CD8-positive, alpha-beta T cell (primary cell): ENCODE measurements at regions of chr5 and their contacts with region 1.

Region 1: DNA sequence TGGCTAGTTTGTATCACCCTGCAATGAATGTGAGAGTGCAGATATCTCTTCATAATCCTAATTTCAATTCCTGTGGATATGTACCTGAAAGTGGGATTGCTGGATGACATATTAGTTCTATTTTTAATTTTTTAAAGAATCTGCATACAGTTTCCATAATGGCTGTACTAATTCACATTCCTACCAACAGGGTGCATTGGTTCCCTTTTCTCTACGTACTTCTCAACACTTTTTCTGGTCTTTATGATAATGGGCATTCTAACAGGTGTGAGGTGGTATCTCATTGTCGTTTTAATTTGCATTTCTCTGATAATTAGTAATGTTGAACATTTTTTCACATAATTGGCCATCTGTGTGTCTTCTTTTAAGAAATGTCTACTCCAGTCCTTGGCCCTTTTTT is 927.5 kb downstream of the DTWD2 start:
- DNase-seq: no peak
- ATAC-seq: no peak
- H3K4me3 ChIP-seq: no peak overlapping the region
- H3K4me3 Mint-ChIP-seq: no peak overlapping the region
- H3K27ac ChIP-seq: no peak overlapping the region
- H3K27ac Mint-ChIP-seq: no peak overlapping the region
- H3K4me1 ChIP-seq: no peaks in the 10 kb centered on the region
- H3K4me1 Mint-ChIP-seq: no peaks in the 10 kb centered on the region
- H3K27me3 ChIP-seq: no peaks in the 10 kb centered on the region
- H3K27me3 Mint-ChIP-seq: no peaks in the 10 kb centered on the region
- CTCF ChIP-seq: no peak

Region 2: GRCh38 chr5:118044169-118044568 is 16.7 kb before region 1 on chr5:
- CTCF ChIA-PET with region 1: no interaction called
- POLR2A ChIA-PET with region 1: no interaction called
- intact Hi-C with region 1: loop called in 1 of 2 experiments (anchors 2 kb)
- DNase-seq: no peak
- ATAC-seq: no peak
- H3K4me3 ChIP-seq: no peak overlapping the region
- H3K4me3 Mint-ChIP-seq: no peak overlapping the region
- H3K27ac ChIP-seq: no peak overlapping the region
- H3K27ac Mint-ChIP-seq: no peak overlapping the region
- H3K4me1 ChIP-seq: no peaks in the 10 kb centered on the region
- H3K4me1 Mint-ChIP-seq: no peaks in the 10 kb centered on the region
- H3K27me3 ChIP-seq: no peaks in the 10 kb centered on the region
- H3K27me3 Mint-ChIP-seq: no peaks in the 10 kb centered on the region
- CTCF ChIP-seq: no peak

Region 3: DNA sequence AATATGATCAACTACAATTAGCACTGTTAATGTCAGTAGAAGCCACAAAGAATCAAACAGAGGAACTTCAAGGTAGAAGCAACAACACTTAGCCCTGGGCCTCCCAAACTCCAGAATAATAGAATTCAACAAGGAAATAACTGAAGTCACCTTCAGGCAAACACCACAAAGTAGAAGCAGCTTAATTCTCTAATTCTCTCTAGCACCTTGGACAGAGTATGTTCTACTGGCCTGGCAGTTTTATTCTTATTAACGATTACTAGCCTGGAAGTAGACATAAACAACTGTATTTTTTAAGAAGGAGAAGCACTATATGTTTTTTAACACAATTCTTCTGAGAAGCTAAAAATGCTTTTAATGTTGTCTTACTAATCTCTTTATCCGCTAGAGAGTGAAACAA is 15.7 kb after region 1 on chr5:
- CTCF ChIA-PET with region 1: no interaction called
- POLR2A ChIA-PET with region 1: no interaction called
- intact Hi-C with region 1: no loop called
- DNase-seq: no peak
- ATAC-seq: no peak
- H3K4me3 ChIP-seq: no peak overlapping the region
- H3K4me3 Mint-ChIP-seq: no peak overlapping the region
- H3K27ac ChIP-seq: no peak overlapping the region
- H3K27ac Mint-ChIP-seq: no peak overlapping the region
- H3K4me1 ChIP-seq: no peaks in the 10 kb centered on the region
- H3K4me1 Mint-ChIP-seq: no peaks in the 10 kb centered on the region
- H3K27me3 ChIP-seq: no peaks in the 10 kb centered on the region
- H3K27me3 Mint-ChIP-seq: no peaks in the 10 kb centered on the region
- CTCF ChIP-seq: no peak

Region 4: GRCh38 chr5:118303296-118303695 is 242.5 kb after region 1 on chr5:
- CTCF ChIA-PET with region 1: no interaction called
- POLR2A ChIA-PET with region 1: no interaction called
- intact Hi-C with region 1: no loop called
- DNase-seq: no peak
- ATAC-seq: no peak
- H3K4me3 ChIP-seq: no peak overlapping the region
- H3K4me3 Mint-ChIP-seq: no peak overlapping the region
- H3K27ac ChIP-seq: no peak overlapping the region
- H3K27ac Mint-ChIP-seq: no peak overlapping the region
- H3K4me1 ChIP-seq: no peaks in the 10 kb centered on the region
- H3K4me1 Mint-ChIP-seq: no peaks in the 10 kb centered on the region
- H3K27me3 ChIP-seq: no peaks in the 10 kb centered on the region
- H3K27me3 Mint-ChIP-seq: no peaks in the 10 kb centered on the region
- CTCF ChIP-seq: no peak

Region 5: GRCh38 chr5:118736396-118736795 is 675.6 kb after region 1 on chr5:
- CTCF ChIA-PET with region 1: no interaction called
- POLR2A ChIA-PET with region 1: no interaction called
- intact Hi-C with region 1: no loop called
- DNase-seq: no peak
- ATAC-seq: no peak
- H3K4me3 ChIP-seq: no peak overlapping the region
- H3K4me3 Mint-ChIP-seq: no peak overlapping the region
- H3K27ac ChIP-seq: no peak overlapping the region
- H3K27ac Mint-ChIP-seq: no peak overlapping the region
- H3K4me1 ChIP-seq: no peaks in the 10 kb centered on the region
- H3K4me1 Mint-ChIP-seq: no peaks in the 10 kb centered on the region
- H3K27me3 ChIP-seq: no peaks in the 10 kb centered on the region
- H3K27me3 Mint-ChIP-seq: no peaks in the 10 kb centered on the region
- CTCF ChIP-seq: no peak